Psoas muscle (tissue), 8 donors: ENCODE measurements at regions of chr2 and their contacts with region 1.

Region 1: DNA sequence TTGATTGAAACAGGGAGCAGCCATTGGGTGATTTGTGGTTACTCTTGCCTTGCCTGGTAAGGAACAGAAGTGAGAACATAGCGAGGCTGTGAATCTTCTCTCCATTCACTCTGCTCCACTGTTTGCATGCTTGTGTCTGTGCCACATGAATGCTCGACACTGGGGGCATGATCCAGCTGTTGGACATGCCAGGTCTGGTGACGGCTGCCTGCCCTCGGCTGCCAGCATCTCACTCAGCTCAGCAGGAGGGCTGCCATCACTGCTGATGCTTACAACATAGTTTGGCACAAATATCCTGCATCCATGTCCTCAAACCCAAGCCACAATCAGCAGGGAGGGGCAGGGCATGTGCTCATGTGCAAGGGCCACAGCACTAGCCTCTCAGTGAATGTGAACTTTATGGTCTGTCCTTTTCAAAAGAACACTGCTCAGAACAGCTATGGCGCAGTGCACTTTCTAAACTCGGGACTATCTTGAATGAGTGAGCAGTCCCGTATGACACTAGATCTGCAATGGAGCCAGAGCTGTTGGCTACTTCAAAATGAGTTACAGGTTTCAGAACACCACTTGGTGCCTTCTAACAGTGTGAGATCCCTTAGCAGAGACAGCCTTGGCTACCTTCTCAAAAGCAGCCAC is 126.3 kb downstream of the NRP2 start:
- DNase-seq: peak; percentile 28 to 62
- ATAC-seq: peak; percentile 74 to 96 (median 88)
- H3K4me3 ChIP-seq: no peak overlapping the region
- H3K27ac ChIP-seq: no peak overlapping the region
- H3K4me1 ChIP-seq: peaks cover 5% of the 10 kb centered on the region
- H3K27me3 ChIP-seq: no peaks in the 10 kb centered on the region
- CTCF ChIP-seq: no peak

Region 2: DNA sequence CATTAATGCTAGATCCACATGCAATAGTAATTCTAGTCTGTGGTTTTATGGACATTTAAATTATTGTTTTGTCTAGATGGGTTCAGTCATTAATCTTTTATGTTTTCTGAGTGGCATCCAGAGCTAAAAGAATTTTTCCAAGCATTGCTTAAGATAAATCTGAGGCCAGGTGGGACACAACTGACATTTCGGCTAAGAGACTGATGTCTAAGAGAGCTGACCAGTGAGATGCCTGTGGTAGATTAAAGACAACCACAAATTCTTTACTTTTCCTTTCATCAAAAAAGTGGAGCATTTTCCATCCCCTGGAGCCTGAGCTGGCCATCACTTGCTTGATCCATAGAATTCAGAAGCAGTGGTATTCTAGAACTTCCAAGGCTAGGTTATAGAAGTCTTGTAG is 55.9 kb after region 1 on chr2:
- intact Hi-C with region 1: loop called in 1 of 2 experiments (anchors 5 kb)
- DNase-seq: no peak
- ATAC-seq: no peak
- H3K4me3 ChIP-seq: no peak overlapping the region
- H3K27ac ChIP-seq: no peak overlapping the region
- H3K4me1 ChIP-seq: no peaks in the 10 kb centered on the region
- H3K27me3 ChIP-seq: peaks cover 0 to 4% (median 2%) of the 10 kb centered on the region in 3 donors
- CTCF ChIP-seq: no peak